Thyroid gland (tissue), 4 donors: ENCODE measurements at regions of chr2 and their contacts with region 1.

Region 1: GRCh38 chr2:20097879-20098714 is 46.7 kb upstream of the LAPTM4A start:
- DNase-seq: peak; percentile 79 to 86
- H3K4me3 ChIP-seq: no peak overlapping the region
- H3K27ac ChIP-seq: no peak overlapping the region
- H3K4me1 ChIP-seq: peaks cover 0 to 7% of the 10 kb centered on the region in 2 donors
- H3K27me3 ChIP-seq: no peaks in the 10 kb centered on the region
- CTCF ChIP-seq: peak; percentile 54 to 93 (median 89)
- POLR2A ChIP-seq: no peak

Region 2: DNA sequence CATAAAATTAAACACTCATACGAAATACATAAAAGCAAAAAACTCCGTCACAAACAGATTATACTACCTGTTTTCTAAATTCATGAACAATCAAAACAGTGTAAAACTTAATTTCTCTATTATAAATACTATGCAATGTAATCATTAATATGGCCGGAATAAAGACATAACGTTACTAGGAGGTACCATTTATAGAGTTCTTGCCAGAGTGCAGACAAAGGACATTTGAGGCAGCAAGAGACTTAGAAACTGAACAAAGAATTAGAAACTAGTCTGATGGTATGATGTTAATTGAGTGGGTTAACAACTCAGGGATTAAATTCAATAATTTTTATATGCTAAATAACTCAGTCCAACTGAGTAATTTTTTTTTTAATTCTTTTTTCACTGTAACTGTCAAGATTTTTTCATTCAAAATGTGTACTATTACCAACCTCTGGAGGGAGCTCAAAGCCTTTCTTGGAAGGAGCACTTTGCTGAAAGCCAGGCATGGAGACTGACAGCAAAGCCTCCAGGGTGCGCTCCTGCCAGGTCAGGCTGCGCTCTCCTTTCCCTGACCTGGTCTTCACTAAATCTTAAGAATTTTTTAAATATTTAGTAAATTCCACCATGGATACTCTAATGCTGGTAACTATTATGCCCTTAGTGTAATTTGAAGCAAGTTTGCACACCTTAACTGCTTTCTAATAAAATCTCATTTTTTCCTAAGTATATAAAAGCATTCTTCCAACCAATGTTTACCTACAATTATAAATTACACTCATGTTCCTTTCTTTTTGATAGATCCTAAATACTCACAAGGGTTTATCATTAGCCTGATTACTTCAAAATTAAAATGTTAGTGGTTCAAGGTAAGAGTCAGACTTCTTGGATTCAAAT is 142.3 kb before region 1 on chr2:
- intact Hi-C with region 1: loop called (anchors 5 kb)
- DNase-seq: peak; percentile 50 to 52
- H3K4me3 ChIP-seq: no peak overlapping the region
- H3K27ac ChIP-seq: no peak overlapping the region
- H3K4me1 ChIP-seq: no peaks in the 10 kb centered on the region
- H3K27me3 ChIP-seq: no peaks in the 10 kb centered on the region
- CTCF ChIP-seq: peak in 5 of 6 experiments; percentile 27 to 76 (median 62)
- POLR2A ChIP-seq: no peak

Region 3: GRCh38 chr2:20015472-20016083 is 82.5 kb before region 1 on chr2:
- intact Hi-C with region 1: loop called (anchors 2 kb)
- DNase-seq: no peak
- H3K4me3 ChIP-seq: no peak overlapping the region
- H3K27ac ChIP-seq: no peak overlapping the region
- H3K4me1 ChIP-seq: peaks cover 0 to 17% of the 10 kb centered on the region in 2 donors
- H3K27me3 ChIP-seq: no peaks in the 10 kb centered on the region
- CTCF ChIP-seq: peak; percentile 30 to 77 (median 55)
- POLR2A ChIP-seq: no peak